Activated CD8-positive, alpha-beta T cell treated with anti-CD3 and anti-CD28 coated beads for 36 hours (primary cell): ENCODE measurements at regions of chr5 and their contacts with region 1.

Region 1: DNA sequence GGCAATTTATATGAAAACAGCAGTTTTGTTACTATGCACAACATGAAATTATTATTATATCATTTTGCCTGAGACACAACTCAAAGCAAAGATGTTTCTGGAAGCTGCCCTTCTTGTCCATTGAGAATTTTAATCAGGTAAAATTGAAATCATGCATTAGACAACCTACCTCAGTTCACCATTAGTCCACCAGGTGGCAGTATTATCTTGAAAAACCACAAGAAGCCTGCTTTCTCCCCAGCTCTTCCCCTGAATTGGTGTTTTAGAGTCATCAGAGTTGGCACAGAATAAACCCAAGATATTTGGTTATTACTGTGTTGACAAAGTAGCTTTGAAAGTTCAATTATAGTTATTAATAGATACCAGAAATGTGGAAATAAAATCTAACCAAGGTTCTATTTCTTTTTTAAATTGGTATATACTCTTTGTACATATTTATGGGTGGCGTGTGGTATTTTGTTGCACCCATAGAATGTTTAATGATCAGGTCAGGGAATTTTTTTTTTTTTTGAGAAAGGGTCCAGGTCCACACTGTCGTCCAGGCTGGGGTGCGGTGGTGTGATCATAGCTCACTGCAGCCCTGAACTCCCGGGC is 25.7 kb downstream of the UTP15 start:
- DNase-seq: peak; percentile 52
- ATAC-seq: peak; percentile 66
- H3K4me3 Mint-ChIP-seq: no peak overlapping the region
- H3K27ac Mint-ChIP-seq: no peak overlapping the region
- H3K4me1 Mint-ChIP-seq: no peaks in the 10 kb centered on the region
- H3K27me3 Mint-ChIP-seq: no peaks in the 10 kb centered on the region
- CTCF ChIP-seq: peak; percentile 86

Region 2: DNA sequence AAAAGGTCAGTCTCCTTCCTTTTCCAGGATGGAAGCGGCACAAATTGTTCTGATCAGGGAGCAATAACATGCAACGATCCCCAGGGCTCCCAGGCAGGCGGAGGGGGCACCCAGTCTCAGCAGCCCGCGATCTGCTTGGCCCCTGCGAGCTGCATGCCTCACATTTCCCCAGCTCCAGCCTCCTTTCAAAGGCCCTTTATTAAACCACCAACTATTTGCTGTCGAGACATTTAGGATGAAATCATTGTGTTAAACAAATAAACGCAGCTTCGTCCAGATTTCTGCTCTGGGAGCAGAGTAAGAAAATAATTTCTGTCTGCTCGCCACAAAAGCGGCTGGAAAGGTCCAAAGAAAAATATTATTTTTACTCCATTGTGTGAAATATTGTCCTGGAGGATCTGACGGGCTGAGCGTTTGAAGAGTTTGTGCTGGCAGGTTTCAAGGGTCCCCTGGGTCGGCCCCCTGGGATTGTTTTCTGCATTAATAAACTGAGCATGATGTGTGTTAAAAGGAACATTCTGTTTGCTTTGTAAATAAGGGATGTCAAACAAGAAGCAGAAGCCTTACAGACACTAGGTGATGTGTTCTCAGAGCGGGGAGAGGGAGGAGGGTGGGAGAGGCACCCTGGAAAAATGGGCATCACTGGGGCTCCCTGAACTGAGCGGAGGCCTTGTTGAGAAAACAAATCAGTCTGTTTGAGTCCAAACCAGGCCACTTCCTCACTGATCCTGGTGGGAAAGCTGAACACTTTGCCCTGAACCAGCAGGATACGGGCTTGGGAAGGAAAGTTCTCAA is 252.7 kb before region 1 on chr5:
- CTCF ChIA-PET with region 1: no interaction called
- POLR2A ChIA-PET with region 1: no interaction called
- intact Hi-C with region 1: no loop called
- DNase-seq: no peak
- ATAC-seq: no peak
- H3K4me3 Mint-ChIP-seq: no peak overlapping the region
- H3K27ac Mint-ChIP-seq: no peak overlapping the region
- H3K4me1 Mint-ChIP-seq: no peaks in the 10 kb centered on the region
- H3K27me3 Mint-ChIP-seq: peaks cover 60% of the 10 kb centered on the region
- CTCF ChIP-seq: no peak

Region 3: DNA sequence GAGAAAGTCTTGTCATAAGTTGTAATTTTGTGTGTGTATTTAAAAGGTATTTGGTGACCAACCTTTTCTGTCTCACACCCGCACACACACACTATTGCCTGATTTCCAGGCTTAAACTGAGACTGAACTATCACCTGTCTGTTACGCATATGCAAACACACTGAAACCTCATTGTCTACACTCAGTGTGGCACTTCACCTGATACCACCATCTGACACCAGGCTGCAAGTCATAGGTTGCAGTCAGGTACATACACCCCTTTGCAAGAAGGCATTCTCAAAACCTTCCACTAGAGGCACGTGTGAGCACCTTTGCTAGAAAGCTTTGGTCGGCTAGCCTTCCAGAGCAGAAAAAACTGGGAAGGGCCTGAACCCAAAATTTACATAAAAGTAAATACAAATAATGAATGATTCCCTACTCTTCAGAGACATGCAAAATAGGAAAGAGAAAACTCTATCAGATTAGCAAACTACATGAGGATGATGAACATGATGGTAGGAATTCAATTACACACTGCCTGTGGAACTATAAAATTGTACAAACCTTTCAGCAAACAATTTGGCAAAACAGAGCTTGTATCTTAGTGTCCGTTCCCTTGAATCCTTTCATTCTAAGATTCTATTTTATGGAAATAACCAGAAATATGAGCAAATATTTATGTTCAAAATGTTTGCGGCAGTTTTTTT is 136.7 kb before region 1 on chr5:
- CTCF ChIA-PET with region 1: no interaction called
- POLR2A ChIA-PET with region 1: no interaction called
- intact Hi-C with region 1: no loop called
- DNase-seq: peak; percentile 51
- ATAC-seq: peak; percentile 86
- H3K4me3 Mint-ChIP-seq: no peak overlapping the region
- H3K27ac Mint-ChIP-seq: no peak overlapping the region
- H3K4me1 Mint-ChIP-seq: peaks cover 4% of the 10 kb centered on the region
- H3K27me3 Mint-ChIP-seq: peaks cover 61% of the 10 kb centered on the region
- CTCF ChIP-seq: peak; percentile 79

Region 4: GRCh38 chr5:73558950-73559349 is 32.2 kb before region 1 on chr5:
- CTCF ChIA-PET with region 1: interaction called, 12 read pairs
- POLR2A ChIA-PET with region 1: no interaction called
- intact Hi-C with region 1: no loop called
- DNase-seq: no peak
- ATAC-seq: no peak
- H3K4me3 Mint-ChIP-seq: no peak overlapping the region
- H3K27ac Mint-ChIP-seq: no peak overlapping the region
- H3K4me1 Mint-ChIP-seq: peaks cover 13% of the 10 kb centered on the region
- H3K27me3 Mint-ChIP-seq: no peaks in the 10 kb centered on the region
- CTCF ChIP-seq: no peak

Region 5: GRCh38 chr5:73565139-73565968 is 25.8 kb before region 1 on chr5 and contains the starts of genes ANKRA2 and UTP15:
- CTCF ChIA-PET with region 1: interaction called, 16 read pairs
- POLR2A ChIA-PET with region 1: interaction called, 3 read pairs
- intact Hi-C with region 1: no loop called
- DNase-seq: peak; percentile 100
- ATAC-seq: peak; percentile 94
- H3K4me3 Mint-ChIP-seq: peak within 1 kb of the TSS; percentile 99
- H3K27ac Mint-ChIP-seq: peak within 1 kb of the TSS; percentile 100
- H3K4me1 Mint-ChIP-seq: peaks cover 43% of the 10 kb centered on the region
- H3K27me3 Mint-ChIP-seq: no peaks in the 10 kb centered on the region
- CTCF ChIP-seq: no peak
- total RNA-seq, gene ANKRA2: 20.2 to 22.0 TPM
- total RNA-seq, gene UTP15: 30.6 to 34.6 TPM

Region 6: GRCh38 chr5:73603998-73604397 is 12.8 kb after region 1 on chr5:
- CTCF ChIA-PET with region 1: interaction called, 16 read pairs
- POLR2A ChIA-PET with region 1: no interaction called
- intact Hi-C with region 1: no loop called
- DNase-seq: no peak
- ATAC-seq: no peak
- H3K4me3 Mint-ChIP-seq: no peak overlapping the region
- H3K27ac Mint-ChIP-seq: no peak overlapping the region
- H3K4me1 Mint-ChIP-seq: no peaks in the 10 kb centered on the region
- H3K27me3 Mint-ChIP-seq: no peaks in the 10 kb centered on the region
- CTCF ChIP-seq: no peak

Region 7: GRCh38 chr5:73693481-73694061 is 102.4 kb after region 1 on chr5:
- CTCF ChIA-PET with region 1: interaction called, 15 read pairs
- POLR2A ChIA-PET with region 1: no interaction called
- intact Hi-C with region 1: loop called (anchors 5 kb)
- DNase-seq: peak; percentile 23
- ATAC-seq: no peak
- H3K4me3 Mint-ChIP-seq: peak overlapping the region; percentile 18
- H3K27ac Mint-ChIP-seq: peak overlapping the region; percentile 22
- H3K4me1 Mint-ChIP-seq: peaks cover 32% of the 10 kb centered on the region
- H3K27me3 Mint-ChIP-seq: peaks cover 29% of the 10 kb centered on the region
- CTCF ChIP-seq: no peak

Region 8: DNA sequence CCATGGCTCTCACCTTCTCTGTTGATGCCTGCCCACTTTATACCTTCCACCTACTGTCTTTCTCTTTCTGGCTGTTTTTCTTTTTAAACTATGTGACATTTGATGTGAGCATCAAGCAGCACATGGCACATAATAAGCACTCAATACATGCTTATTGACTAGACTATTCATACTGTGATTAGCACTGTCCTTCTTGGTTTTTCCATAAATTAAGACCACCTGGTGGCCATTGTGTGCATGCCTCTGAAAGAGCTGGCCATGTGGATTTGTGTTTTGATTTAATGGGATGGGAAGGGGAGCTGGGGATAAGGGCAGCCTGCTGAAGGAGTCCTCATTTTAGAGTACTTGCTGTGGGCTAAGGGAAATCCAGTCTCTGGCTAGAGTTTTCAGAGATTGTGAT is 114.2 kb after region 1 on chr5:
- CTCF ChIA-PET with region 1: no interaction called
- POLR2A ChIA-PET with region 1: no interaction called
- intact Hi-C with region 1: no loop called
- DNase-seq: no peak
- ATAC-seq: no peak
- H3K4me3 Mint-ChIP-seq: no peak overlapping the region
- H3K27ac Mint-ChIP-seq: no peak overlapping the region
- H3K4me1 Mint-ChIP-seq: no peaks in the 10 kb centered on the region
- H3K27me3 Mint-ChIP-seq: peaks cover under 1% of the 10 kb centered on the region
- CTCF ChIP-seq: no peak

Region 9: DNA sequence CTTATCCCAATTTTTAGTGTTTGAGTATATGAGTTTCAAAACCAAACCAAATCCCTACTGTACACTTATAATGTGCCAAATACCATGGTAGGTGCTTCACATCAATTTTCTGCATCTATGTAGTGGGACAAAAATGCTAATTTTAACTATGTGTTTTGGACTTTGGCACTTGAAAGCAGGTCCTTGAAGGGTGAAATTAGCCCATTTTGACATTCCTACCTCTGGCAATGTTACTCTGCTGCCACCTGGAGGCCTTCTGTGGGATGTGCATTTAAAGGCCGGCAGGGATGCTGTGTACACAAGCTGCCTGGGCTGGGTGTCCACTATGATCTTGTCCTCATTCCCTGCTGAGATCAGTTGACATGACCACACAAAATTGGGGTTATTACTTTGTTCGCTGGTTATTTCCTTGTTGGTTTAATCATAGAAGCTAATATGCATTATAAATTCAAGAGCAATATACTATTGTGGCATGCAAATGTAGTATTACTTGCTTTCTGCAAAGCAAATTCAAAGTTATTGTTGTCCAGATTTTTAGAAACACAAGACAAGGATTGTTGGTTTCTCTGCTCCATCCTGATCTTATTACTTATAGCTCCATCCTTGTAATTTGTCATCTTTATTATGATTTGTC is 201.6 kb after region 1 on chr5:
- CTCF ChIA-PET with region 1: interaction called, 228 read pairs
- POLR2A ChIA-PET with region 1: interaction called, 3 read pairs
- intact Hi-C with region 1: loop called (anchors 1 kb)
- DNase-seq: peak; percentile 82
- ATAC-seq: peak; percentile 79
- H3K4me3 Mint-ChIP-seq: no peak overlapping the region
- H3K27ac Mint-ChIP-seq: no peak overlapping the region
- H3K4me1 Mint-ChIP-seq: peaks cover 3% of the 10 kb centered on the region
- H3K27me3 Mint-ChIP-seq: peaks cover 20% of the 10 kb centered on the region
- CTCF ChIP-seq: peak; percentile 90

Region 10: GRCh38 chr5:74648835-74649293 is 1057.7 kb after region 1 on chr5:
- CTCF ChIA-PET with region 1: no interaction called
- POLR2A ChIA-PET with region 1: no interaction called
- intact Hi-C with region 1: loop called (anchors 5 kb)
- DNase-seq: peak; percentile 43
- ATAC-seq: peak; percentile 72
- H3K4me3 Mint-ChIP-seq: no peak overlapping the region
- H3K27ac Mint-ChIP-seq: no peak overlapping the region
- H3K4me1 Mint-ChIP-seq: no peaks in the 10 kb centered on the region
- H3K27me3 Mint-ChIP-seq: peaks cover 15% of the 10 kb centered on the region
- CTCF ChIP-seq: peak; percentile 91